ENCODE measurements at regions of chr1 and their contacts with region 1.

Region 1: DNA sequence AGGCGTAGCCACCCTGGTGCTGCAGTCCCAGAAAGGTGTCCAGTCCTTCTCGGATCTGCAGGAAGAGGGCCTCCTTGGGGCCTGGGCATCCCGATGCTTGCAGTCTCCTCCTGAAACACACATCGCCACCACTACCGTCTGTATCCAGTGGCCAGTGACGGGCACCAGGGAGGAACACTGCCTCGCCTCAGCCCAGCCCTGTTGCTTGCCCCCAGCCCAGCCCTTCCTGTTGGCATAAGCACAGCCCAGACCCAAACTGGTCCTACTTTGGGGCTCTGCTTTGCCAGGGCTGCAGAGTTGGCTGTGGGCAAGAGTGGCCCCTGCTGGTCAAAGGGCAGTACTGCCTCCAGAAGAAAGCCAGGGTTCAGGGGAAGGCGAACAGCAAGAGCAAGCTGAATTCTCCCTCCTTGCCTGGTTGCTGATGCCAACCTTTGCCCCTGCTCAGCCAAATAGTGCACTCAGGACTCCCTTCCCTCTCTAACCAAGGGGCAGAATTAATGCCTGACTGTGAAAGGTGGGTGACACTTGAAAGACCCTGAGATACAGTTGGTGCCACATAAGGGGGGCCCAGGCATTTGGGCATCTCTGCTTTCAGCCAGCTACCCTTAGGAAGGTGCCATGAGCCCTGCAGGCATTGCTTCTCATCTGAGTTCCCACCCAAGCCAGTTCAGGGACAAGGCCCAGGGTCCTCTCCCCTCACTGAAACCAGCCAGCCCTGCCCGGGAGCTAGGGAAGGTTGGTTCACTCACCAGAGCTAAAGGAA is 11.1 kb upstream of the ARHGEF2 start:
- DNase-seq: no peak
- ATAC-seq: peak; percentile 97
- H3K4me3 ChIP-seq: no peak overlapping the region
- H3K27ac ChIP-seq: peak overlapping the region; percentile 40; the same call in 1 of the 2 replicates
- H3K4me1 ChIP-seq: peaks cover 17% of the 10 kb centered on the region
- H3K27me3 ChIP-seq: no peaks in the 10 kb centered on the region
- CTCF ChIP-seq: peak; percentile 96 to 99 (median 99)
- EP300 ChIP-seq: no peak
- POLR2A ChIP-seq: no peak
- RAD21 ChIP-seq: peak; percentile 100

Region 2: DNA sequence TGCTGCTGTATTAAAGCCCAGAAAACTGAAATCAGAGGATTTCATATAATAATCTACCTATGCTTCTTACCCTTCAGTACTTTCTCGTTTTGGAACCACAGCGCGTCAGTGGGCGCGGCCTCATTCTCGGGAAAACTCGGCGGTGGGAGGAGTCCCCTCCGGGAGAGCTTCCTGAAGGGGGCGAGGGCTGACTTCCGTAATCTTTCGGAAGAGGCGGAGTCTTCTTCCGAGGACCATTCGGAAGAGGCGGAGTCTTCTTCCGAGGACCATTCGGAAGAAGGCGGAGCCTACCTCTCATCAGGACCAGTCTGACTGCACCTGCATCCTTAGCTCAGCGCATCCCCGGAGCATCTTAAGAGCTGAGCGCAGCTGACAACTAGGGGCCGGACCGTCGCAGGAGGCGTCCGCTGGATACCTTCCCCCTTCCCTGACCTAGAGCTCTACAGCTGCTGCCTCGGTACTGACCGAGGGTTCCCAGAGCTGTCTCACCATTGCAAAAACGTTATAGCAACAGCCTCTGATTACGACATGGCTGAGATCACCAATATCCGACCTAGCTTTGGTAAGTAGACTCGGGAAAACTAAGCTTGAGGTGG is 130.1 kb before region 1 on chr1 and contains the start of gene SYT11:
- CTCF ChIA-PET with region 1: interaction called, 6 read pairs
- POLR2A ChIA-PET with region 1: interaction called, 4 read pairs
- RAD21 ChIA-PET with region 1: interaction called, 10 read pairs
- SMC1A ChIA-PET with region 1: interaction called, 4 read pairs
- in situ Hi-C with region 1: no loop called
- intact Hi-C with region 1: loop called (anchors 5 kb)
- DNase-seq: peak; percentile 91
- ATAC-seq: peak; percentile 80
- H3K4me3 ChIP-seq: peak within 1 kb of the TSS; percentile 83
- H3K27ac ChIP-seq: peak within 1 kb of the TSS; percentile 70
- H3K4me1 ChIP-seq: peaks cover 15% of the 10 kb centered on the region
- H3K27me3 ChIP-seq: no peaks in the 10 kb centered on the region
- CTCF ChIP-seq: no peak
- EP300 ChIP-seq: no peak
- POLR2A ChIP-seq: peak; percentile 43; the same call in 1 of the 2 replicates
- RAD21 ChIP-seq: no peak
- polyA plus RNA-seq, gene SYT11: 7.7 to 7.8 TPM

Region 3: GRCh38 chr1:155946633-155947219 is 42.7 kb before region 1 on chr1:
- CTCF ChIA-PET with region 1: interaction called, 44 read pairs
- POLR2A ChIA-PET with region 1: interaction called, 273 read pairs
- RAD21 ChIA-PET with region 1: interaction called, 214 read pairs
- SMC1A ChIA-PET with region 1: interaction called, 133 read pairs
- in situ Hi-C with region 1: no loop called
- intact Hi-C with region 1: no loop called
- DNase-seq: no peak
- ATAC-seq: peak; percentile 49
- H3K4me3 ChIP-seq: peak overlapping the region; percentile 12
- H3K27ac ChIP-seq: peak overlapping the region; percentile 79
- H3K4me1 ChIP-seq: peaks cover 50% of the 10 kb centered on the region
- H3K27me3 ChIP-seq: no peaks in the 10 kb centered on the region
- CTCF ChIP-seq: no peak
- EP300 ChIP-seq: no peak; a peak in 1 of 4 replicates
- POLR2A ChIP-seq: no peak
- RAD21 ChIP-seq: no peak

Region 4: GRCh38 chr1:155970531-155971167 is 18.8 kb before region 1 on chr1:
- CTCF ChIA-PET with region 1: interaction called, 54 read pairs
- POLR2A ChIA-PET with region 1: interaction called, 9 read pairs
- RAD21 ChIA-PET with region 1: interaction called, 65 read pairs
- SMC1A ChIA-PET with region 1: interaction called, 15 read pairs
- in situ Hi-C with region 1: no loop called
- intact Hi-C with region 1: no loop called
- DNase-seq: no peak
- ATAC-seq: peak; percentile 90
- H3K4me3 ChIP-seq: peak overlapping the region; percentile 70
- H3K27ac ChIP-seq: peak overlapping the region; percentile 23
- H3K4me1 ChIP-seq: peaks cover 57% of the 10 kb centered on the region
- H3K27me3 ChIP-seq: no peaks in the 10 kb centered on the region
- CTCF ChIP-seq: no peak
- EP300 ChIP-seq: peak in 1 of 2 experiments; percentile 46; a peak in 1 of 4 replicates
- POLR2A ChIP-seq: 0 out of 2 replicates have a peak, but pooled peaks have one; percentile 34
- RAD21 ChIP-seq: no peak

Region 5: GRCh38 chr1:156001682-156002171 is 12.3 kb after region 1 on chr1:
- CTCF ChIA-PET with region 1: interaction called, 10 read pairs
- POLR2A ChIA-PET with region 1: interaction called, 4 read pairs
- RAD21 ChIA-PET with region 1: interaction called, 7 read pairs
- SMC1A ChIA-PET with region 1: interaction called, 5 read pairs
- in situ Hi-C with region 1: no loop called
- intact Hi-C with region 1: no loop called
- DNase-seq: no peak
- ATAC-seq: peak; percentile 25; the same call in 2 of the 3 replicates
- H3K4me3 ChIP-seq: no peak overlapping the region
- H3K27ac ChIP-seq: no peak overlapping the region
- H3K4me1 ChIP-seq: no peaks in the 10 kb centered on the region
- H3K27me3 ChIP-seq: no peaks in the 10 kb centered on the region
- CTCF ChIP-seq: no peak
- EP300 ChIP-seq: no peak
- POLR2A ChIP-seq: no peak
- RAD21 ChIP-seq: no peak

Measured in GM12878 (cell line).